ENCODE measurements at regions of chr1 and their contacts with region 1.

Region 1: GRCh38 chr1:27489910-27490741 is at the start of gene WASF2:
- DNase-seq: peak; percentile 97 to 98 (median 98)
- ATAC-seq: peak; percentile 93 to 97 (median 96)
- H3K4me3 ChIP-seq: peak within 1 kb of the TSS; percentile 77 to 100 (median 96)
- H3K27ac ChIP-seq: peak within 1 kb of the TSS; percentile 98 to 100 (median 100)
- H3K4me1 ChIP-seq: peaks cover 5 to 62% (median 37%) of the 10 kb centered on the region in 12 donors
- H3K27me3 ChIP-seq: no peaks in the 10 kb centered on the region
- CTCF ChIP-seq: peak in 1 of 12 donors; percentile 5
- POLR2A ChIP-seq: peak; percentile 83 to 96
- total RNA-seq, gene WASF2: 27.5 to 103 (median 47.9) TPM

Region 2: GRCh38 chr1:27416387-27417111 is 73.6 kb before region 1 on chr1:
- intact Hi-C with region 1: loop called in 2 of 10 experiments (anchors 5 kb)
- DNase-seq: peak in 1 of 5 donors; percentile 47
- ATAC-seq: peak in 3 of 4 donors; percentile 35 to 50 (median 40)
- H3K4me3 ChIP-seq: no peak overlapping the region
- H3K27ac ChIP-seq: peak overlapping the region in 7 of 12 donors; percentile 20 to 86 (median 75)
- H3K4me1 ChIP-seq: peaks cover 3 to 67% (median 56%) of the 10 kb centered on the region in 12 donors
- H3K27me3 ChIP-seq: no peaks in the 10 kb centered on the region
- CTCF ChIP-seq: peak; percentile 51 to 73 (median 66)
- POLR2A ChIP-seq: no peak

Region 3: DNA sequence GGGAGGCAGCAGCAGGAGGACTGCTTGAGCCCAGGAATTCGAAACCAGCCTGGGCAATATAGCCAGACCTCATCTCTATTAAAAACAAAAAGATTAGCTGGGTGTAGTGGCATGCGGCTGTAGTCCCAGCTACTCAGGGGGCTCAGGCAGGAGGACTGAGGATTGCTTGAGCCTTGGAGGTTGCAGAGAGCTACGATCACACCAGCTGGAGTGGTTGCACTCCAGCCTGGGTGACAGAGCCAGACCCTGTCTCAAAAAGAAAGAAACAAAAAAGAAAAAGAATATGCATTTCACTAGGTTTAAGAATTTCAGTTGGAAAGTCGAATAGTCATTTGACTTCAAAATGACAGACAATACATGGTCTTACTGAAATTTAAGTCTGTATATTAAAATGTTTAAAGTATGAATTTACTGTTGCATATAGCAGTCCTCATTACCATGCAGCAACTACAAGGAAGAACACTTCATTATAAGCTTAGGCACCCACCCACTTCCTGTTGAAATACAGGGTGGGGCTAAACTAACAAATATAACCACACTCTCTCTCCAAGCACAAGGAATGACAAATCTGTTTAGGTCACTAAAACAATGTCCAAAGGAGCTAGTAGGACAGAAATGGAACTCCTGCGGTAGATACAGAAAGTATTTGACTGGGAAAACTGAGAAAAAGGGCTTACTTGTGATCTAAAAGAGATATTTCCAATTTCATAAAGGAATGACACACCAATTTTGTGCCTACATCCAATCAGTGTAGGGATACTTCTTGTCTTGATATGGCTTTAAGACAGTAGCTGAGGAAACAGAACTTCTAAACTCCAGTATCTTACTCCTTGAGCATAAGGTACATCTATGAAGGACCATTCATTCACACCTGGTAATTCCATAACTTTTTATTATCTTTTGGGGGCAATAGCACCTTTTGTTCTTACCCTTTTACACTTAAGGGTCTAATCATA is 53.6 kb before region 1 on chr1:
- intact Hi-C with region 1: loop called in 8 of 10 experiments (anchors 2 to 10 kb)
- DNase-seq: peak in 1 of 5 donors; percentile 30
- ATAC-seq: peak; percentile 74 to 88 (median 85)
- H3K4me3 ChIP-seq: peak overlapping the region in 5 of 12 donors; percentile 1 to 43 (median 8)
- H3K27ac ChIP-seq: peak overlapping the region; percentile 49 to 94 (median 74)
- H3K4me1 ChIP-seq: peaks cover 20 to 90% (median 78%) of the 10 kb centered on the region in 12 donors
- H3K27me3 ChIP-seq: no peaks in the 10 kb centered on the region
- CTCF ChIP-seq: no peak
- POLR2A ChIP-seq: peak in 1 of 2 donors; percentile 67

Region 4: DNA sequence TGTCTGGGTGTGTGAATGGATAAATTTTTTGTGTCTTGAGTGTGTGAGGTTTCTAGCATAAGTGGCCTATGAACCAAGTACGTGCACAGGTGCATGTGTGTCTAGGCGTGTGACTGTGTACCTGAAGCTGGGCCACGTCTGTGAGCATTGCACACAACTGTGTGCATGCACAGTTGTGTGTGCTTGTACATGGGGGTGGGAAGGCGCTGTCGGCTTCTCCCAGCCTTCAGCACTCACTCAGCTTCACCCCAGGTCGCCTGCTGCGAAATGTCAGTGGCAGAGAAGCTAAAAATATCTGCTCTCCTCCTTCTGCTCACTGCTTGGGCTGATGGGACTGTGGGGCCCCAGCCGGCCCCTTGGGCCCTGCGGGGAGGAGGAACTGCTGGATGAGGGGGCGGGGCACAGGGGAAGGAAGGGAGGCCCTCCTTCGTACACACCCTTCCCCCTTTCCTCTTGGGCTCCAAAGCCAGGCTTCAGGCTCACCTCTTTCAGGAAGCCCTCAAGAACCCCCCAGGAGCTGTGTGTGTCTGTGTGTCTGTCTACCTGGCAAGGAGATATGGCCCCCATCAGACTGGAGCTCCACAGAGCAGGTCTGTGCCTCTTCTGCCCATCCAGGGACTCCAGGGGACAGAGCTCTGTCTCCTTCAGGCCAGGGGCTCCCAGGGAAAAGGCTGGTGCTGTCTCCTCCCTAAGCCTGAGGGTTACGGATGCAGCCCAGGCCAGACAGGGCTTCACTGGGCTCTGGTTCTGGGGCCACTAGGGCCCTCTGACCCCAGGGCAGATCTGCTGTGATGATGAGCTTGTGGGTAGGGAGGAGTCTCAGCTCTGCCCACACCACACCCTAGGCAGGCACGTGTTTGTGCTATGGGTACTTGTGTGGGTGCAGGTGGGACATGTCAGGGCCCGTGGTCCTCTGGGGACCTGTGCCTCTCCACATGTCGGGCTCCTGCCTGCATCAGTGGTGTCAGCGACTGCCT is 35.5 kb after region 1 on chr1:
- intact Hi-C with region 1: loop called in 1 of 10 experiments (anchors 5 kb)
- DNase-seq: peak; percentile 90 to 94 (median 91)
- ATAC-seq: peak; percentile 73 to 80 (median 78)
- H3K4me3 ChIP-seq: peak overlapping the region in 11 of 12 donors; percentile 7 to 65 (median 49)
- H3K27ac ChIP-seq: peak overlapping the region; percentile 83 to 97 (median 92)
- H3K4me1 ChIP-seq: peaks cover 25 to 93% (median 86%) of the 10 kb centered on the region in 12 donors
- H3K27me3 ChIP-seq: no peaks in the 10 kb centered on the region
- CTCF ChIP-seq: no peak
- POLR2A ChIP-seq: peak in 1 of 2 donors; percentile 16

Region 5: GRCh38 chr1:27659497-27660299 is 169.6 kb after region 1 on chr1:
- intact Hi-C with region 1: no loop called
- DNase-seq: peak; percentile 94 to 98 (median 96)
- ATAC-seq: peak; percentile 68 to 89 (median 82)
- H3K4me3 ChIP-seq: peak overlapping the region; percentile 24 to 79 (median 60)
- H3K27ac ChIP-seq: peak overlapping the region; percentile 90 to 99 (median 96)
- H3K4me1 ChIP-seq: peaks cover 16 to 71% (median 50%) of the 10 kb centered on the region in 12 donors
- H3K27me3 ChIP-seq: no peaks in the 10 kb centered on the region
- CTCF ChIP-seq: no peak
- POLR2A ChIP-seq: peak in 1 of 2 donors; percentile 55

Region 6: GRCh38 chr1:27671964-27672749 is 182.0 kb after region 1 on chr1 and contains the start of gene IFI6:
- intact Hi-C with region 1: loop called in 1 of 10 experiments (anchors 5 kb)
- DNase-seq: peak; percentile 85 to 91 (median 89)
- ATAC-seq: peak; percentile 95 to 99 (median 98)
- H3K4me3 ChIP-seq: peak within 1 kb of the TSS; percentile 38 to 94 (median 61)
- H3K27ac ChIP-seq: peak within 1 kb of the TSS; percentile 43 to 92 (median 86)
- H3K4me1 ChIP-seq: peaks cover 0 to 55% (median 23%) of the 10 kb centered on the region in 12 donors
- H3K27me3 ChIP-seq: no peaks in the 10 kb centered on the region
- CTCF ChIP-seq: peak in 11 of 12 donors; percentile 5 to 62 (median 42)
- POLR2A ChIP-seq: peak in 1 of 2 donors; percentile 61
- total RNA-seq, gene IFI6: 18.3 to 140 (median 70.2) TPM